Posterior vena cava (tissue), 2 donors: ENCODE measurements at regions of chr6 and their contacts with region 1.

Region 1: GRCh38 chr6:108884211-108885059 is 36.2 kb downstream of the ARMC2 start:
- DNase-seq: no peak

Region 2: GRCh38 chr6:108921547-108922361 is 37.3 kb after region 1 on chr6:
- intact Hi-C with region 1: loop called in 1 of 2 experiments (anchors 1 kb)
- DNase-seq: no peak

Region 3: DNA sequence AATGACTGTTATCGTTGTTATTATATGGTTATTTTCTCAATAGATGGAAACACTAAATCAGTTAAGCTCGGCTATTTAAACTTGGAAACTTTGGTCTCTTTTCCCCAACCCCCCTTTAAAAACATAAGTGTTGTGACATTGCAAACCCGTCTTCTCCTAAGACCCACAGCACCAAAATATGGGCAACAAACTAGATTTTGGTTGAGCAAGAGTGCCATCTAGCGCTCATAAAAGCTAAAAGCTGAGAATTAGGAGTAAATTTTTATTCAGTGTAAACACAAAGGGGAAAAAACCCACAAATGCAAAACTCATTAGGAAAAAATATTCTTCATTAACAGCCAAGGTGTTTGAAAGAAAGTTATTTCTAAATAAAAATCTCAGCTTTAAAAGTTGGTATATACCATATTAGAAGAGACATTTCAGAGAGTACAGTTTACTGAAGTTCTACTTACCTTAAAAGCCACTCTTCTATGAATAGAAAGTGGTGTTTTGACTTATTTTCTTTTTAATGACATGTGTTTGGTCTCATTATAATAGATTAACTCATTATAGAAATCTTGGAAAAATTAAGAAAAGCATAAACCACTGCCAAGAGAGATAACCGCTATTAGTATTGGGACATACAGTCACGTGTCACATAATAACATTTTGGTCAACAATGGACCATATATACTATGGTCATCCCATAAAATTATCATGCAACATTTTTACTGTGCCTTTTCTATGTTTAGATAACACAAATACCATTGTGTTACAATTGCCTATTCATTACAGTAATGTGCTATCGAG is 189.1 kb after region 1 on chr6:
- intact Hi-C with region 1: no loop called
- DNase-seq: no peak